ENCODE measurements at regions of chr12 and their contacts with region 1.

Region 1: GRCh38 chr12:6944381-6945186 is 762 bp downstream of the C12orf57 start:
- DNase-seq: peak; percentile 92
- ATAC-seq: peak; percentile 76
- H3K4me3 ChIP-seq: peak overlapping the region; percentile 73
- H3K27ac ChIP-seq: peak overlapping the region; percentile 90
- H3K4me1 ChIP-seq: peaks cover 5% of the 10 kb centered on the region; the same call in 1 of the 2 replicates
- H3K27me3 ChIP-seq: no peaks in the 10 kb centered on the region
- CTCF ChIP-seq: peak; percentile 94
- POLR2A ChIP-seq: no peak
- RAD21 ChIP-seq: peak; percentile 75

Region 2: DNA sequence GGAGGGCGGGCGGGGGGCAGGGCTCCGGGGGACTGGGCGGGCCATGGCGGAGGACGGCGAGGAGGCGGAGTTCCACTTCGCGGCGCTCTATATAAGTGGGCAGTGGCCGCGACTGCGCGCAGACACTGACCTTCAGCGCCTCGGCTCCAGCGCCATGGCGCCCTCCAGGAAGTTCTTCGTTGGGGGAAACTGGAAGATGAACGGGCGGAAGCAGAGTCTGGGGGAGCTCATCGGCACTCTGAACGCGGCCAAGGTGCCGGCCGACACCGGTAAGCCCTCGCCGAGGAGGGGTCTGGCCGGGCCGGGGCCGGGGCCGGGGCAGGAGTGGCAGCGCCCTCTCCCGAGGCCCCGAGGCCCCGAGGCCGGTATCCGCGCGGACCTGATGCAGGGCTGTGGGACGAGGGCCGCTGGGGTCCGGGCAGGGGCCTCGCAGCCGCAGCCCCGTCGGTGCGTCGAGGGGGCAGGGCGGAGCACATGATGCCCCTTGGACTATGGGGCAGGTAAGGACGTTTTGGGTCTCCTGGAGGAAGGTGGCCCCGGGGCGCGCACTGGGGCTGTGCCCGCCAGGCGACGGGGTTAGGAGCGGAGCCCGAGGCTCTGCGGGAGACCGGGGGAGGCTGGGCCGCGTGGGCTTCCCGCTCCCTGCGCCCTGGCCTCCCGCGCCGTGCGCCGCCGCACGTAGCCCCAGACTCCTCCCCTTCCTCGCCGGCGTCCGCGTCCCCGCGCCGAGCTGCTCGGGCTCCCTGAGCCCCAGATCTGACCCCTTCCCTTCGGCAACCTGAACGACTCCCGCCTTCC is 77.0 kb before region 1 on chr12 and contains the start of gene TPI1:
- CTCF ChIA-PET with region 1: interaction called, 4 read pairs
- POLR2A ChIA-PET with region 1: interaction called, 4 read pairs
- dilution Hi-C with region 1: no loop called
- in situ Hi-C with region 1: no loop called
- intact Hi-C with region 1: loop called (anchors 2 kb)
- DNase-seq: peak; percentile 74
- ATAC-seq: peak; percentile 82
- H3K4me3 ChIP-seq: peak within 1 kb of the TSS; percentile 87
- H3K27ac ChIP-seq: peak within 1 kb of the TSS; percentile 97
- H3K4me1 ChIP-seq: peaks cover 19% of the 10 kb centered on the region
- H3K27me3 ChIP-seq: no peaks in the 10 kb centered on the region
- CTCF ChIP-seq: no peak
- POLR2A ChIP-seq: peak; percentile 99
- RAD21 ChIP-seq: no peak
- total RNA-seq, gene TPI1: 1,842 and 2,176 TPM in 2 replicates

Region 3: GRCh38 chr12:6925540-6926279 is 18.9 kb before region 1 on chr12:
- CTCF ChIA-PET with region 1: no interaction called
- POLR2A ChIA-PET with region 1: interaction called, 11 read pairs
- dilution Hi-C with region 1: no loop called
- in situ Hi-C with region 1: no loop called
- intact Hi-C with region 1: no loop called
- DNase-seq: peak; percentile 90
- ATAC-seq: peak; percentile 28
- H3K4me3 ChIP-seq: peak overlapping the region; percentile 25
- H3K27ac ChIP-seq: peak overlapping the region; percentile 93
- H3K4me1 ChIP-seq: peaks cover 25% of the 10 kb centered on the region
- H3K27me3 ChIP-seq: no peaks in the 10 kb centered on the region
- CTCF ChIP-seq: no peak
- POLR2A ChIP-seq: no peak
- RAD21 ChIP-seq: no peak

Region 4: DNA sequence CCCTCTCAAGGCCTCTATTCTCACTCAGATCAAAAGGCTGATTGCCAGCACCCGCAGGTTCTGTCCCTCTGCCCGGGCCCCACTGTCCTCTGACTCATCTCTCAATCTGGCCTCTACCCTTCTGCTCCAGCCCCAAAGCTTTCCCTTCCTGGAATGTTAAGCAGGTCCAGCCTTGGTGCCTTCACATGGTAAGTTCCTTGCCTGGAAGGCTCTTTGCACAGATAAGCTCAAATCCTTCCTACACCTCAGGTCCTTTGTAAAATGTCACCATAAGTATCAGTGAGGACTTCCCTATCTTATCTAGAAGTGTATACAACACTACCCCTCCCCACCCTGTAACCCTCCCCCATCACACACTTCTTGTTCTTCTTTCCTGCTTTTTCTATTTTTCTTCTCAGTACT is 51.5 kb after region 1 on chr12:
- CTCF ChIA-PET with region 1: no interaction called
- POLR2A ChIA-PET with region 1: no interaction called
- dilution Hi-C with region 1: no loop called
- in situ Hi-C with region 1: no loop called
- intact Hi-C with region 1: no loop called
- DNase-seq: peak; percentile 69
- ATAC-seq: peak; percentile 96
- H3K4me3 ChIP-seq: no peak overlapping the region
- H3K27ac ChIP-seq: no peak overlapping the region
- H3K4me1 ChIP-seq: 0 out of 2 replicates have a peak, but pooled peaks cover 4% of the 10 kb centered on the region
- H3K27me3 ChIP-seq: no peaks in the 10 kb centered on the region
- CTCF ChIP-seq: no peak
- POLR2A ChIP-seq: no peak
- RAD21 ChIP-seq: no peak

Region 5: DNA sequence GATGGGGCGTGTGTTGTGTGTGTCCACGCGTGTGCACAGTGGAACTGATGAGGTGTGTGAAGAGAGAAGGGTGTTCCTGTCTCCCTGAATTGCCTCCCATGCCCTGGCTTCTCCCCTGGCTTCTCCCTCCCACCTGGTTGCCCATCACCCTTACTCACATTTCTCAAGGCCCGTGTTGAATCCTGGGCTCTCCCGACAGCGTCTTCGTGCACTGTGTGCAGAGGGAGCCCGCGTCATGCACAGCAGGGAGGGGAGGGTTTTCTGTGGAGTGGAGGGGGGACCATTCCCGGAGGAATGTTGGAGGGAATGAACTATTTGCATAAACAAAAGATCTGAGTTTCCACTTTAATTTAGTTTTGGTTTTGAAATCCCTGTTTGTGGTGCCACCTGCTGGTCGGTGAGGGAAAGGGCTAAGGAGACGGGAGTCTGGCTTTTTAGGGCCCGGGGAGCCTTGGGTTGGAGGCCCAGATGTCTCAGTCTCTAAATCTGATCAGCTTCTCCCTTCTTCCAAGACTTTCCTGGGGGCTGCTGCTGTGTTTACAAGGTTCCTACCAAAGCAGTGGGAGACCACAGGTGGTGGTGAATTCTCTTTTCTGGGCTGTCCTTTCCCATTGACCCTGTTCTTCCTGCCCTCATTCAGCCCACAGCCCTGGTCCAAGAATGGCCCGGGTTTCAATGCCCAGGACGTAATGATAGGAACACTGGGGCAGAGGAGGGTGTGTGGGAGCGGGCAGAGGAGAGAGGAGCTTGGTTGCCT is 147.8 kb after region 1 on chr12 and contains the start of gene C1R:
- CTCF ChIA-PET with region 1: interaction called, 3 read pairs
- POLR2A ChIA-PET with region 1: no interaction called
- dilution Hi-C with region 1: no loop called
- in situ Hi-C with region 1: no loop called
- intact Hi-C with region 1: loop called (anchors 1 kb)
- DNase-seq: peak; percentile 92
- ATAC-seq: peak; percentile 94
- H3K4me3 ChIP-seq: peak within 1 kb of the TSS; percentile 55
- H3K27ac ChIP-seq: peak within 1 kb of the TSS; percentile 84
- H3K4me1 ChIP-seq: peaks cover 26% of the 10 kb centered on the region
- H3K27me3 ChIP-seq: no peaks in the 10 kb centered on the region
- CTCF ChIP-seq: peak; percentile 94
- POLR2A ChIP-seq: no peak
- RAD21 ChIP-seq: peak; percentile 85
- total RNA-seq, gene C1R: 19.4 and 38.4 TPM in 2 replicates

Region 6: DNA sequence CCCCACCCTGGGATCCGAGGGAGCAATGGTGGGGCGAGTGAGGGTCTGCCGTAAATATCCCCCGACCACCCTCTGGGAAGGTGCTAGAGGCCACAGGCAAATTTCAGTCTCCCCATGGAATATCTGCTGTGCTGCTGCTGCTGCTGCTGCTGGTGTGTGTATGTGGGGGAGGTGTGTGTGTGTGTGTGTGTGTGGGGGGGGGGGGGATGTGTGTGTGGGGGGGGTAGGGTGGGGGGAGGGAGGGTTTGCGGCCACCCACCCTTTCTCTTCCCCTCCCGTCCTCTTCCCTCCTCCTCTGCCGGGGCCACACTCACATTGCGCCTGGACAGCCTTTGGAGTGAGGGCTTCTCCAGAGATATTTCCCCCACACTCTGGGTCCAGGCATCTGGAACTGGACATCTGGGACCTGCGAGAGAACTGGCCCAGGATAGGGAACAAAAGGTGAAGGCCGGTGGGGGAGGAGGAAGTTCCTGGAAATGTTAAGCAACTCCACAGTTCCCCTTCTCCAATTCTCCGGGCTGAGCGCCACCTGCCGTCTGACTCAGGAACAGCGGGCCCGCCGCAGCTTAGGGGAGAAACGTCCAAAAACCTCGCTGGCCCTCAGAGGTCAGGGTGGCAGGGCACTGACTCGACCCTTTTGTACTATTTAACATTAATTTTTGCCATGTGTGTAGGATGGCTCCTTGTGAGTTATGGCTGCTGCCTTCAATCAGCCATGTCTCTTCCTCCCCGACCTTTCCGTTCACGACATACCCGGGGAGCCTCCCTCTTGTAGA is 164.4 kb after region 1 on chr12 and contains the start of gene C1RL:
- CTCF ChIA-PET with region 1: interaction called, 5 read pairs
- POLR2A ChIA-PET with region 1: no interaction called
- dilution Hi-C with region 1: no loop called
- in situ Hi-C with region 1: loop called (anchors 10 kb)
- intact Hi-C with region 1: loop called (anchors 1 kb)
- DNase-seq: peak; percentile 77
- ATAC-seq: peak; percentile 58
- H3K4me3 ChIP-seq: peak within 1 kb of the TSS; percentile 66
- H3K27ac ChIP-seq: peak within 1 kb of the TSS; percentile 97
- H3K4me1 ChIP-seq: peaks cover 5% of the 10 kb centered on the region; the same call in 1 of the 2 replicates
- H3K27me3 ChIP-seq: no peaks in the 10 kb centered on the region
- CTCF ChIP-seq: peak; percentile 93
- POLR2A ChIP-seq: peak; percentile 15; the same call in 1 of the 2 replicates
- RAD21 ChIP-seq: peak; percentile 79
- total RNA-seq, gene C1RL: 7.5 and 9.1 TPM in 2 replicates

Region 7: GRCh38 chr12:7180685-7181084 is 236.1 kb after region 1 on chr12:
- CTCF ChIA-PET with region 1: no interaction called
- POLR2A ChIA-PET with region 1: no interaction called
- dilution Hi-C with region 1: no loop called
- in situ Hi-C with region 1: no loop called
- intact Hi-C with region 1: no loop called
- DNase-seq: peak; percentile 13
- ATAC-seq: no peak
- H3K4me3 ChIP-seq: no peak overlapping the region
- H3K27ac ChIP-seq: no peak overlapping the region
- H3K4me1 ChIP-seq: no peaks in the 10 kb centered on the region
- H3K27me3 ChIP-seq: peaks cover 3% of the 10 kb centered on the region
- CTCF ChIP-seq: no peak
- POLR2A ChIP-seq: no peak
- RAD21 ChIP-seq: no peak

Region 8: DNA sequence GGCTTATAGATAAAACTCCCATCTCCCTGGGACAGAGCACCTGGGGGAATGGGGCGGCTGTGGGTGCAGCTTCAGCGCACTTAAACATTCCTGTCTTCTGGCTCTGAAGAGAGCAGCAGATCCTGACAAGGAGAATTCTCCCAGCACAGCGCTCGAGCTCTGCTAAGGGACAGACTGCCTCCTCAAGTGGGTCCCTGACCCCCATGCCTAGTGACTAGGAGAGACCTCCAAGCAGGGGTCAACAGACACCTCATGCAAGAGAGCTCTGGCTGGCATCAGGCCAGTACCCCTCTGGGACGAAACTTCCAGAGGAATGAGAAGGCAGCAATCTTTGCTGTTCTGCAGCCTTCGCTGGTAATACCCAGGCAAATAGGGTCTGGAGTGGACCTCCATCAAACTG is 527.5 kb after region 1 on chr12:
- CTCF ChIA-PET with region 1: no interaction called
- POLR2A ChIA-PET with region 1: no interaction called
- dilution Hi-C with region 1: no loop called
- in situ Hi-C with region 1: no loop called
- intact Hi-C with region 1: no loop called
- DNase-seq: no peak
- ATAC-seq: no peak
- H3K4me3 ChIP-seq: no peak overlapping the region
- H3K27ac ChIP-seq: no peak overlapping the region
- H3K4me1 ChIP-seq: no peaks in the 10 kb centered on the region
- H3K27me3 ChIP-seq: no peaks in the 10 kb centered on the region
- CTCF ChIP-seq: no peak
- POLR2A ChIP-seq: no peak
- RAD21 ChIP-seq: no peak

Measured in IMR-90 (cell line).